ENCODE measurements at regions of chr6 and their contacts with region 1.

Region 1: GRCh38 chr6:151390276-151391032 is 905 bp downstream of the ZBTB2 start:
- DNase-seq: peak; percentile 97
- H3K4me3 Mint-ChIP-seq: peak overlapping the region; percentile 95
- H3K27ac Mint-ChIP-seq: peak overlapping the region; percentile 70
- H3K4me1 Mint-ChIP-seq: peaks cover 54% of the 10 kb centered on the region
- H3K27me3 Mint-ChIP-seq: no peaks in the 10 kb centered on the region

Region 2: DNA sequence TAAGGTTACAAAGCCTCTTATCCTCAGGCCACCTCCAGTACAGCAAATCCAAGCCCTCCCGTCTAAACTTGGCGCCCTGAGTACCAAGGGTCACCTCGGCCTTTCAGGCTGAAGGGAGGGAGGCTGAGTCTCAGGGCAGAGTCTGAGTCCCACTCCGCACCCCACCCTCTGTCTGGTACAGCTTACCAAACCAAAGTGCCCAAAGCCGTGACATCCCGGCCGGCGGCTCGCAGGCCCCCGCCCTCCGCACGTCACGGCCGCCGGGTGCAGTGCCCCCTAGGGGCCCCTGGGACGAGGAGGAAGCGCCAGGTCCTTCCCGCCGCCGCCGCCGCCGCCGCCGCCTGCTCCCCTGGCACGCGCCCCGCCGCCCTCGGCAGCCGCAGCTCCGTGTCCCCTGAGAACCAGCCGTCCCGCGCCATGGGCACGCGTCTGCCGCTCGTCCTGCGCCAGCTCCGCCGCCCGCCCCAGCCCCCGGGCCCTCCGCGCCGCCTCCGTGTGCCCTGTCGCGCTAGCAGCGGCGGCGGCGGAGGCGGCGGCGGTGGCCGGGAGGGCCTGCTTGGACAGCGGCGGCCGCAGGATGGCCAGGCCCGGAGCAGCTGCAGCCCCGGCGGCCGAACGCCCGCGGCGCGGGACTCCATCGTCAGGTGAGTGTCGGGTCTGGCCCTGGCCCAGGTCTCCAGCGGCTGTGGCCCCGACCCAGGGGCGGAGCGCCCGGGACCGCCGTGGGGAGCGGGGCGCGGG is 524.9 kb before region 1 on chr6 and contains the start of gene MTHFD1L:
- CTCF ChIA-PET with region 1: no interaction called
- intact Hi-C with region 1: loop called (anchors 1 kb)
- DNase-seq: peak; percentile 79
- H3K4me3 Mint-ChIP-seq: peak within 1 kb of the TSS; percentile 96
- H3K27ac Mint-ChIP-seq: peak within 1 kb of the TSS; percentile 91
- H3K4me1 Mint-ChIP-seq: peaks cover 30% of the 10 kb centered on the region
- H3K27me3 Mint-ChIP-seq: peaks cover 15% of the 10 kb centered on the region
- total RNA-seq, gene MTHFD1L: 181 to 194 TPM

Region 3: GRCh38 chr6:151379933-151380847 is 10.3 kb before region 1 on chr6:
- CTCF ChIA-PET with region 1: interaction called, 5 read pairs
- intact Hi-C with region 1: loop called (anchors 1 kb)
- DNase-seq: peak; percentile 33
- H3K4me3 Mint-ChIP-seq: peak overlapping the region; percentile 86
- H3K27ac Mint-ChIP-seq: peak overlapping the region; percentile 98
- H3K4me1 Mint-ChIP-seq: peaks cover 61% of the 10 kb centered on the region
- H3K27me3 Mint-ChIP-seq: no peaks in the 10 kb centered on the region

Region 4: DNA sequence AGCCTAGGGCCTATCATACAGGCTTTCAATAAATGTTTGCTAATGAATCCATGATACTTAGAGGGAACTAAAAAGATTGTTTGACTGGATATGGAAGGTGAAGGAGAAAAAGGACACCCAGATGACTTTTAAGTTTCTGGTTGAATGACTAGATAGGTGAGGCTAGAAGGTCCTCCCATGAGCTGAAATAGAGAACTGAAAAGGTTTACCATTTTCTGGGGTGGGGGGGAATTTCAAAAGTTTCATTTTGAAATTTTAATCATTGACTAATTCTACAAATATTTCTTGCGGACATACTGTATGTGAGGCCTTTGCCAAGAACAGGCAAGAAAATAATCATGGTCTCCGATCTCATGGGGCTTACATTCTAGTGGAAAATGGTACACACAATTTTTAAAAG is 18.8 kb after region 1 on chr6:
- CTCF ChIA-PET with region 1: interaction called, 28 read pairs
- intact Hi-C with region 1: no loop called
- DNase-seq: no peak
- H3K4me3 Mint-ChIP-seq: no peak overlapping the region
- H3K27ac Mint-ChIP-seq: no peak overlapping the region
- H3K4me1 Mint-ChIP-seq: peaks cover 15% of the 10 kb centered on the region
- H3K27me3 Mint-ChIP-seq: no peaks in the 10 kb centered on the region

Region 5: GRCh38 chr6:151702851-151703611 is 312.6 kb after region 1 on chr6:
- CTCF ChIA-PET with region 1: no interaction called
- intact Hi-C with region 1: loop called (anchors 1 kb)
- DNase-seq: no peak
- H3K4me3 Mint-ChIP-seq: no peak overlapping the region
- H3K27ac Mint-ChIP-seq: peak overlapping the region; percentile 12
- H3K4me1 Mint-ChIP-seq: peaks cover 45% of the 10 kb centered on the region
- H3K27me3 Mint-ChIP-seq: peaks cover 11% of the 10 kb centered on the region

Region 6: GRCh38 chr6:152301764-152302568 is 911.5 kb after region 1 on chr6:
- CTCF ChIA-PET with region 1: no interaction called
- intact Hi-C with region 1: loop called (anchors 5 kb)
- DNase-seq: peak; percentile 93
- H3K4me3 Mint-ChIP-seq: peak overlapping the region; percentile 100
- H3K27ac Mint-ChIP-seq: peak overlapping the region; percentile 96
- H3K4me1 Mint-ChIP-seq: peaks cover 30% of the 10 kb centered on the region
- H3K27me3 Mint-ChIP-seq: no peaks in the 10 kb centered on the region

Region 7: GRCh38 chr6:153002607-153003365 is 1612.3 kb after region 1 on chr6 and contains the start of gene MTRF1L:
- CTCF ChIA-PET with region 1: no interaction called
- intact Hi-C with region 1: loop called (anchors 5 kb)
- DNase-seq: peak; percentile 95
- H3K4me3 Mint-ChIP-seq: peak within 1 kb of the TSS; percentile 98
- H3K27ac Mint-ChIP-seq: peak within 1 kb of the TSS; percentile 94
- H3K4me1 Mint-ChIP-seq: peaks cover 33% of the 10 kb centered on the region
- H3K27me3 Mint-ChIP-seq: no peaks in the 10 kb centered on the region
- total RNA-seq, gene MTRF1L: 11.6 to 12.0 TPM

Measured in activated naive CD4-positive, alpha-beta T cell treated with anti-CD3 and anti-CD28 coated beads for 36 hours (primary cell).